ENCODE measurements at regions of chr7 and their contacts with region 1.

Region 1: DNA sequence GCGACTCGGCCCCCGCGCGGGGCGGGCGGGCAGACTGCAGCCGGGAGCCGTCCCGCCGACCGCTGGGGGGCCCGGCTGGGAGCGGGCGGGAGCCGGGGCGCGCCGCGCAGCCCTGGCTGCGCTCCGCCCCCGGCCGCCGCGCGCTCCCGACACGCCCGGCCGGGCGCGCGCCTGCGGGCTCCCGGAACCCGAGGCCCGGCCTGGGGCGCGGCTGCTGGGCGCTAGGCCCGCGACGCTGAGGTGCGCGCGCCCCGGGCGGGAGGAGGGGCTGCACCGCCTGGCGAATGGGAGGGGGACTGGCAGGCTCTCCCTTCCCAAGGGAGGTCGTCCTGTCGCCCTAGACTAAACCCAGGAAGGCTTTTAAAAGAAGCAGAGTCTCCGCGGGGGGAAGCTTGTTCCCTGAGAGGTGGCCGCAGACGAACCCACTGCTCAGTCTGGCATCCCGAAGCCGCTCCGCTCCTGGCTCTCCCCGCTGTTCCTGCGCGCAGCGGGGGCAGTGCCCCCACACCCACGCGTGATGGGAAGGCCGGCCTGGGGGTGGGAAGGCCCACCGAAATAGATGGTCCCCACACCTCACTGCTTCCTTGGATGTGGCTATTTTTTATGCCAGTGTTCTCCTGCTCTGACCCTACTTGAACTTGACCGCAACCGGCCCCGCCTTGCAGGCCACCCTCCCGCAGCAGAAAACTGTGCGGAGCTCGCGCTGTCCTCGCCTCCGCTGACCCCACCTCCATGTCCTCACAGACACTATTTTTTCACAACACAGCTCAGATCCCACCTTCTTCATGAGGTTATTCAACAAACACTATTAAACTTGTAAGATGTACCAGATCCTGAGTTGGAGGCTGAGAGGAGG is at the start of gene VOPP1:
- DNase-seq: peak; percentile 61
- H3K4me3 ChIP-seq: peak within 1 kb of the TSS; percentile 89 to 99 (median 97)
- H3K27ac ChIP-seq: peak within 1 kb of the TSS; percentile 97
- H3K4me1 ChIP-seq: peaks cover 55% of the 10 kb centered on the region
- H3K27me3 ChIP-seq: no peaks in the 10 kb centered on the region
- CTCF ChIP-seq: no peak
- POLR2A ChIP-seq: peak; percentile 41
- total RNA-seq, gene VOPP1: 154 and 159 TPM in 2 replicates

Region 2: DNA sequence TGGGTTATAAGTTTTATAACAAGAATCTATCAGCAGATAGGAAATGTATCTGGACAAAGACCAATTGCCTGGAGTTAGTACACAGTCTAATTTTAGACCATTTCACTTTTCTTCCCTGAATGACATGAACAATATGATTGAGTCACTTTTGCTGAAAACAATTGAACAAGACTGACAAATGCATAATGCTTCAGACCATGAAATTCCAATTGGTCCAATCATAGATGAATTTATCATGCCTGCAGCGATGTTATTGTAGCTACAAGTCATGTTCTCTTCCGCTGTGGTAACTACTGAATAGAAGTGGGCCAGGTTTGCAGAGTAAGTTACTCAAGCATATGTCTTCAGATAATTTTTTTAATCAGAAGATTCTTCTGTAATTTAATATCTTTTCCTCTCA is 957.1 kb before region 1 on chr7:
- CTCF ChIA-PET with region 1: no interaction called
- POLR2A ChIA-PET with region 1: no interaction called
- dilution Hi-C with region 1: no loop called
- intact Hi-C with region 1: no loop called
- DNase-seq: no peak
- H3K4me3 ChIP-seq: no peak overlapping the region
- H3K27ac ChIP-seq: no peak overlapping the region
- H3K4me1 ChIP-seq: no peaks in the 10 kb centered on the region
- H3K27me3 ChIP-seq: no peaks in the 10 kb centered on the region
- CTCF ChIP-seq: no peak
- POLR2A ChIP-seq: no peak

Region 3: DNA sequence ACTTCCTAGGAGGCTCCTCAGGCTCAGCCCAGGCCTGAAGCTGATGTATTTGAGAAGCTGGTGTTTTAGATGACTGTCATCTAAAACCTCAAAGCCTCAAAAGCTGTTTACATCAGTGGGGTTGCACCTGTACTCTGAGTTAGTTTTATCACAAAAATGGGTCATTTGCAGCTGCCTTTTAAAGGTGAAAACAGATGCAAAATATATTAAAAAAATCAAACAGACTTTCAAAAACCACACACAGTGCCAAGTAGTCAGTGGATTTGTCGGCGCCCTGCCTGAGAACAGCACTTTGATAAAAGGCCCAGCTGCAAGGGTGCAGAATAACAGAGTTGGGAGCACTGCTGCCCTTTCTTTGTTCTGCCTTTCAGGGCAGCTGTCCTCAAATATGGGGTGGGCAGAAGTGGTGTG is 103.3 kb before region 1 on chr7:
- CTCF ChIA-PET with region 1: no interaction called
- POLR2A ChIA-PET with region 1: no interaction called
- dilution Hi-C with region 1: no loop called
- intact Hi-C with region 1: no loop called
- DNase-seq: no peak
- H3K4me3 ChIP-seq: no peak overlapping the region
- H3K27ac ChIP-seq: no peak overlapping the region
- H3K4me1 ChIP-seq: no peaks in the 10 kb centered on the region
- H3K27me3 ChIP-seq: no peaks in the 10 kb centered on the region
- CTCF ChIP-seq: no peak
- POLR2A ChIP-seq: no peak

Region 4: GRCh38 chr7:56106108-56107073 is 533.8 kb after region 1 on chr7 and contains the start of gene CHCHD2:
- CTCF ChIA-PET with region 1: no interaction called
- POLR2A ChIA-PET with region 1: no interaction called
- dilution Hi-C with region 1: no loop called
- intact Hi-C with region 1: loop called (anchors 10 kb)
- DNase-seq: peak; percentile 98
- H3K4me3 ChIP-seq: peak within 1 kb of the TSS; percentile 54 to 87 (median 86)
- H3K27ac ChIP-seq: peak within 1 kb of the TSS; percentile 77
- H3K4me1 ChIP-seq: peaks cover 4% of the 10 kb centered on the region
- H3K27me3 ChIP-seq: no peaks in the 10 kb centered on the region
- CTCF ChIP-seq: no peak
- POLR2A ChIP-seq: peak; percentile 70
- total RNA-seq, gene CHCHD2: 368 and 378 TPM in 2 replicates